CD4-positive, alpha-beta T cell (primary cell): ENCODE measurements at regions of chr11 and their contacts with region 1.

Region 1: DNA sequence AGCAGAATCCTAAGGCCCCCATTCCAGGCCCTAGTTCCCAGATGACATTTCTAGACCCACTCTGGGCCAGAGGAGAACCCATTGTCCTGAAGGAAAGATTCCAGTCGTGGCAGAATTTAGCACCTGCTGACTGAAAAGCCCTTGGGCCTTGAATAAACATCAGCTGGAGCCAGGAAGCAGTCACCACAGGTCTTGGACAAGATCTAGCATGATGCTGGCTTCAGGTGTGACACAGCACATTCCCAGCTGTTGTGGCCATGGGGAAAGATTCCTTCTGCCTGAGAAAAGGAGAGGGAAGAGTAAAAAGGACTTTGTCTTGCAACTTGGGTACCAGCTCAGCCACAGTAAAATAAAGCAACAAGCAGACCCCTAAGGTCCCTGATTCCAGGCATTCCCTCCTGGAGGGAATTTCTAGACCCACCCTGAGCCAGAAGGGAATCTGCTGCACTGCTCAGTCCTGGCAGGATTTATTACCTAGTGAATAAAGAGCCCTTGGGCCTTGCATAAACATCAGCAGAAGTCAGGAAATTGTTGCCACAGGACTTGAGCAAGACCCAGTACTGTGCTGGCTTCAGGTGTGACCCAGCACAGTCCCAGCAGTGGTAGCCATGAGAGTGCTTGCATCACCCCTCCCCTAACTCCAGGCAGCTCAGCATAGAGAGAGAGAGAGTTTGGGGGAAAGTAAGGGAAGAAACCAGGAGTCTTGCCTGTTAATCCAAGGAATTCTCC is 42.5 kb upstream of the PAMR1 start:
- DNase-seq: no peak
- ATAC-seq: no peak
- H3K4me3 ChIP-seq: no peak overlapping the region
- H3K4me3 Mint-ChIP-seq: no peak overlapping the region
- H3K27ac ChIP-seq: no peak overlapping the region
- H3K27ac Mint-ChIP-seq: no peak overlapping the region
- H3K4me1 ChIP-seq: no peaks in the 10 kb centered on the region
- H3K4me1 Mint-ChIP-seq: no peaks in the 10 kb centered on the region
- H3K27me3 ChIP-seq: peaks cover 0 to 14% of the 10 kb centered on the region in 2 experiments
- H3K27me3 Mint-ChIP-seq: peaks cover 48% of the 10 kb centered on the region
- CTCF ChIP-seq: no peak

Region 2: DNA sequence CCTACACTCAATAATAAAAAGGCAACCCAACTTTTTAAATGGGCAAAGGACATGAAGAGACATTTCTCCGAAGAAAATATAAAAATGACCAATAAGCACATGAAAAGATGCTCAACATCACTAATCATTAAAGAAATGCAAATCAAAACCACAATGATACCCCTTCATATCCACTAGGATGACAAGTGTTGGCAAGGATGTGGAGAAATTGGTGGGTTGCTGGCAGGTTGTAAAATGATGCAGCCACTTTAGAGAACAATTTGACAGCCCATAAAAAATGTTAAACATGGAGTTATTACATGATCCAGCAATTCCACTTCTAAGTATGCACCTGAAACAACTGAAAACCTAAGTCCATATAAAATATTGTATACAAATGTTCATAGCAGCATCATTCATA is 1602.9 kb before region 1 on chr11:
- CTCF ChIA-PET with region 1: no interaction called
- POLR2A ChIA-PET with region 1: no interaction called
- intact Hi-C with region 1: loop called in 1 of 2 experiments (anchors 5 kb)
- DNase-seq: no peak
- ATAC-seq: no peak
- H3K4me3 ChIP-seq: no peak overlapping the region
- H3K4me3 Mint-ChIP-seq: no peak overlapping the region
- H3K27ac ChIP-seq: no peak overlapping the region
- H3K27ac Mint-ChIP-seq: no peak overlapping the region
- H3K4me1 ChIP-seq: no peaks in the 10 kb centered on the region
- H3K4me1 Mint-ChIP-seq: no peaks in the 10 kb centered on the region
- H3K27me3 ChIP-seq: peaks cover 0 to 3% of the 10 kb centered on the region in 2 experiments
- H3K27me3 Mint-ChIP-seq: peaks cover 11% of the 10 kb centered on the region
- CTCF ChIP-seq: no peak